Transverse colon (tissue), 4 donors: ENCODE measurements at regions of chr19 and their contacts with region 1.

Region 1: DNA sequence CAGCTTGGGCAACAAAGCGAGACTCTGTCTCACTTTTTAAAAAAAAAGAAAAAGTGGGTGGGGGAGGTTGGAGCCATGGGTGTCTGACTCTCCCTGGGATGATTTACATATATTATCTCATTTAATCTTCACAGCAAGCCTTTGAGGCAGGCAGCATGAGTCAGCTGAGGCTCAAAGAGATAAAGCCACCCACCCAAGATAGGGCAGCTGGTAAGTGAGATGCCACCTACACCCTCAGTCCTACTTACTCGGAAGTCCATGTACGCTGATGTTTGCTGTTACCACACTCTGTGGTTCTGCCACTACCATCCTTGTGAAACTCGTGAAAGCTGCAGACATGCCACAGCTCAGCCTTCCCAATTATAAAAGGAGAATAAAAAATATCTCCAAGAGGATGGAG is 142.0 kb upstream of the TSHZ3 start:
- DNase-seq: no peak
- H3K4me3 ChIP-seq: no peak overlapping the region
- H3K27ac ChIP-seq: no peak overlapping the region
- H3K4me1 ChIP-seq: no peaks in the 10 kb centered on the region
- H3K27me3 ChIP-seq: no peaks in the 10 kb centered on the region
- CTCF ChIP-seq: no peak
- EP300 ChIP-seq: no peak
- POLR2A ChIP-seq: no peak

Region 2: GRCh38 chr19:31451686-31452330 is 39.4 kb before region 1 on chr19:
- in situ Hi-C with region 1: no loop called
- intact Hi-C with region 1: loop called (anchors 2 kb)
- DNase-seq: no peak
- H3K4me3 ChIP-seq: no peak overlapping the region
- H3K27ac ChIP-seq: no peak overlapping the region
- H3K4me1 ChIP-seq: no peaks in the 10 kb centered on the region
- H3K27me3 ChIP-seq: no peaks in the 10 kb centered on the region
- CTCF ChIP-seq: no peak
- EP300 ChIP-seq: no peak
- POLR2A ChIP-seq: no peak